Activated CD4-positive, alpha-beta T cell treated with anti-CD3 and anti-CD28 coated beads for 36 hours (primary cell): ENCODE measurements at regions of chr17 and their contacts with region 1.

Region 1: GRCh38 chr17:19377602-19378392 is 501 bp upstream of the MAPK7 start:
- DNase-seq: peak; percentile 97
- ATAC-seq: peak; percentile 96
- H3K4me3 Mint-ChIP-seq: peak overlapping the region; percentile 89
- H3K27ac Mint-ChIP-seq: peak overlapping the region; percentile 98
- H3K4me1 Mint-ChIP-seq: peaks cover 16% of the 10 kb centered on the region
- H3K27me3 Mint-ChIP-seq: no peaks in the 10 kb centered on the region

Region 2: DNA sequence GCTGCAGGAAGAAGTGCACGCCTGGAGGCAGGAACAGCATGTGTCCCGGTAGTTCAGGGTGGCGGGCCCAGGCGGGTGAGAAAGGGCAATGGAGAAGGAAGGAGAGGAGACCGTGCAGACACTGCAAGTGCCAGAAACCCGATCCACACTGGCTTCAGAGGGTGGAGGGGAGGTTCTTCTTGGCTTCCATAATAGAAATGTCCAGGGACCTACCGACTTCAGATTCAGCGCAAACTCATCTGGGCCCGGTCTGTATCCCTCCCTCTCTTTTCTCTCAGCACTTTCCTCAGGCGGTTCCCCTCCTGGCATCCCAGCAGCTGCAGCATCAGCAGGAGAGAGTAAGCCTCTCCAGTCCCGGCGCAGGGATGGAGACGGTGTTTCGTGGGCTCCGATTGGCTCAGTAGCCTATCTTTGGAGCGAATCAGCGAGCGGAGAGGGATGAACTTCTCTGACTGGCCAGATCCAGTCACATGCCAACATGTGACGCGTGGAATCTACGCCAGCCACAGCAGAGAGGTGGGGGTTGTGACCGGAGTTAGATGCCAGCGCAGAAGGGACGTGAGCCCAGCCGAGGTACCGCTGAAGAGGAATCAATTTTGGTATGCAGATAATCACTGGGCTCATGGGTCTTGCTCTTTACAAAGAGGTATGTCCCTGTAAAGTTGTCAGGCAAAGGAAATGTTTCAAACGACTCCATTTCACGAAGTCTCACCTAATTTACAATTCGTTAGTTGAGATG is 521.8 kb before region 1 on chr17:
- CTCF ChIA-PET with region 1: no interaction called
- POLR2A ChIA-PET with region 1: no interaction called
- intact Hi-C with region 1: loop called in 1 of 2 experiments (anchors 5 kb)
- DNase-seq: peak; percentile 94
- ATAC-seq: peak; percentile 85
- H3K4me3 Mint-ChIP-seq: peak overlapping the region; percentile 92
- H3K27ac Mint-ChIP-seq: peak overlapping the region; percentile 90
- H3K4me1 Mint-ChIP-seq: peaks cover 45% of the 10 kb centered on the region
- H3K27me3 Mint-ChIP-seq: no peaks in the 10 kb centered on the region

Region 3: GRCh38 chr17:19362277-19363113 is 15.3 kb before region 1 on chr17 and contains the start of gene B9D1:
- CTCF ChIA-PET with region 1: interaction called, 60 read pairs
- POLR2A ChIA-PET with region 1: interaction called, 21 read pairs
- intact Hi-C with region 1: loop called (anchors 1 kb)
- DNase-seq: peak; percentile 95
- ATAC-seq: peak; percentile 92
- H3K4me3 Mint-ChIP-seq: peak within 1 kb of the TSS; percentile 74
- H3K27ac Mint-ChIP-seq: peak within 1 kb of the TSS; percentile 39
- H3K4me1 Mint-ChIP-seq: peaks cover 6% of the 10 kb centered on the region
- H3K27me3 Mint-ChIP-seq: peaks cover 4% of the 10 kb centered on the region
- total RNA-seq, gene B9D1: 7.4 to 7.8 TPM

Region 4: GRCh38 chr17:19447085-19447583 is 69.3 kb after region 1 on chr17:
- CTCF ChIA-PET with region 1: interaction called, 15 read pairs
- POLR2A ChIA-PET with region 1: no interaction called
- intact Hi-C with region 1: loop called in 1 of 2 experiments (anchors 5 kb)
- DNase-seq: peak; percentile 76
- ATAC-seq: peak; percentile 49
- H3K4me3 Mint-ChIP-seq: no peak overlapping the region
- H3K27ac Mint-ChIP-seq: no peak overlapping the region
- H3K4me1 Mint-ChIP-seq: peaks cover 3% of the 10 kb centered on the region
- H3K27me3 Mint-ChIP-seq: peaks cover 9% of the 10 kb centered on the region

Region 5: DNA sequence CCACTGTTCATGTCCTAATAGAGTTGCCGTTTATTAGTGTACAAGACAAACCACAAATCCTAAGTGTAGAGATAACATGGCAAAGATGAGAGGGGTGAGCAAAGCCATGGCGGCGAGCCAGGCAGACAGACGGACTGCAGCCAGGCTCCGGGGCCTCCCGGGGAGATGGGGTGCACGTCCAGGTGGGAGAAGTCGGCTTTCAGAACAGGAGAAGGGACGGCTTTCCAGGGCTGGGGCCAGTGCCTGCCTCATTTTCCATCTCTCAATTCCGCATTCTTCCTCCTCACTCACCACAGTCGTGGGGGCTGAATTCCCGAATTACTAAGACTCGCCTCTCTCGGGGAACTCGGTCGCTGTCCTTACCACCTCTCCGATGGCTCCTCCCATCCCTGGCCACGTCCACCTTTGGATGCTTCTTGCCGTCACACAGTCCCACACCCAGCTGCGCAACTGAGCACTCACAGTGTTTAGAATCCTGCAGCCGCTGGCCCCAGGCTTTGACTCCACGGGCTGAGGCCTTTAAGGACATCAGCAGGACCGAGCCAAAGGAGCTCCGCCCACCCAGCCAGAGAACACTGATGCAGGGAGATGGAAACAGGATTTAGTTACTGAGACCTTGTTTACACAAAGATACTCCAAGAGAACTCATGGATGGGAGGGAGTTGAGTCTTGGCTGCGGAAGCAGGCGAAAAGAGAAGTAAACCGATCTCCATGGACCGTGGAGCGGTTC is 92.9 kb after region 1 on chr17:
- CTCF ChIA-PET with region 1: no interaction called
- POLR2A ChIA-PET with region 1: no interaction called
- intact Hi-C with region 1: no loop called
- DNase-seq: no peak
- ATAC-seq: no peak
- H3K4me3 Mint-ChIP-seq: no peak overlapping the region
- H3K27ac Mint-ChIP-seq: no peak overlapping the region
- H3K4me1 Mint-ChIP-seq: no peaks in the 10 kb centered on the region
- H3K27me3 Mint-ChIP-seq: peaks cover 2% of the 10 kb centered on the region

Region 6: GRCh38 chr17:19648475-19649406 is 270.9 kb after region 1 on chr17 and contains the start of gene ALDH3A2:
- CTCF ChIA-PET with region 1: no interaction called
- POLR2A ChIA-PET with region 1: interaction called, 4 read pairs
- intact Hi-C with region 1: loop called (anchors 1 to 10 kb)
- DNase-seq: peak; percentile 97
- ATAC-seq: peak; percentile 94
- H3K4me3 Mint-ChIP-seq: peak within 1 kb of the TSS; percentile 79
- H3K27ac Mint-ChIP-seq: peak within 1 kb of the TSS; percentile 87
- H3K4me1 Mint-ChIP-seq: peaks cover 38% of the 10 kb centered on the region
- H3K27me3 Mint-ChIP-seq: peaks cover 1% of the 10 kb centered on the region
- total RNA-seq, gene ALDH3A2: 18.5 to 23.9 TPM

Region 7: DNA sequence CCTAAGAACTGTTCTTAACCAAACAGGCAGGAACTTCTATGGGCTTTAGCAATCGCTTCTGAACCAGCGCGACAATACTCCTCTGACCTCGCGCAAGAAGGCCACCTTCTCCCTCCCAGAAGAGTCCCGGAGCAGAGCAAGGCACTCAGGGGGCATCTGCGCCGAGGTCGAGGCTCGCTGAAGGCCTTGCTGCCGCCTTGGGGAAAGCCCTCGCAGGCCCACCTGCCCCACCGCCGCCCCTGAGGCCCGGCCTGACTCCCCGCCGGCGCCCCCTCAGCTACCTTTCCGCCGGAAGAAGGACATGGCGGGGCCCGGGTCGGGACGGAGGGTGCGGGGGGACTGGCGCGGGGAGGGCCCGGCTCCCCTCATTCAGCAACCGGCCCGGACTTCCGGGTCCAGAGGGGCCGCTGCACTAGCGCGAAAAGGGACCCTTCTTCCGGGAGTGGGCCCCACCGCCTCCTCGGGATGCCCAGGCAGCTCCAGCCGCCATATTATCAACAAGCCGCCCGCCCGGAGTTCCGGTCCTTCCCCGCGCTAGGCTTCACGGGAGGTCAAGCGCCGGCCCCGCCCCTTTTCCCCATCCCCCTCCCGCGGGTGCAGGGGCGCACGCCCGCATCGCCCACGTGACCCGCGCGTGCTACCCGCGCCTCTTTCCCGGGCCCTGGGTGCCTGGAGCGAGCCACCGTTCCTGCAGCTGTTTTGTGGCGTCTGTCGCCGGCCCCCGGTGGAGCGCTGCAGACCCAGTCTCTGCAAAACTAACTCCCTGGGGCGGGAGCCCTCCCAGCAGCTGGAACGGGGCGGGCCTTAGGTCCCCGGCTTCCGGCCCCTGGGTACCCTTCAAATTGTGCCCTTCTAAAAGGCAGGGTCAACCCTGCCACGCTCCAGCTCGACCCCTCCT is 599.8 kb after region 1 on chr17 and contains the start of gene AKAP10:
- CTCF ChIA-PET with region 1: no interaction called
- POLR2A ChIA-PET with region 1: no interaction called
- intact Hi-C with region 1: loop called in 1 of 2 experiments (anchors 5 kb)
- DNase-seq: peak; percentile 98
- ATAC-seq: peak; percentile 85
- H3K4me3 Mint-ChIP-seq: peak within 1 kb of the TSS; percentile 90
- H3K27ac Mint-ChIP-seq: peak within 1 kb of the TSS; percentile 98
- H3K4me1 Mint-ChIP-seq: peaks cover 48% of the 10 kb centered on the region
- H3K27me3 Mint-ChIP-seq: no peaks in the 10 kb centered on the region
- total RNA-seq, gene AKAP10: 31.6 to 35.9 TPM